CD8-positive, alpha-beta T cell (primary cell): ENCODE measurements at regions of chr15 and their contacts with region 1.

Region 1: GRCh38 chr15:39580117-39580484 is 778 bp upstream of the THBS1 start:
- DNase-seq: peak; percentile 78 to 93 (median 85)
- ATAC-seq: peak; percentile 89
- H3K4me3 ChIP-seq: peak overlapping the region in 1 of 2 experiments; percentile 57
- H3K4me3 Mint-ChIP-seq: peak overlapping the region; percentile 68
- H3K27ac ChIP-seq: no peak overlapping the region
- H3K27ac Mint-ChIP-seq: no peak overlapping the region
- H3K4me1 ChIP-seq: peaks cover 10% of the 10 kb centered on the region
- H3K4me1 Mint-ChIP-seq: peaks cover 16% of the 10 kb centered on the region
- H3K27me3 ChIP-seq: peaks cover 5 to 8% of the 10 kb centered on the region in 2 experiments
- H3K27me3 Mint-ChIP-seq: peaks cover 47% of the 10 kb centered on the region
- CTCF ChIP-seq: peak; percentile 89

Region 2: GRCh38 chr15:38474155-38474757 is 1105.8 kb before region 1 on chr15:
- CTCF ChIA-PET with region 1: interaction called, 3 read pairs
- POLR2A ChIA-PET with region 1: no interaction called
- intact Hi-C with region 1: loop called (anchors 5 kb)
- DNase-seq: peak in 7 of 9 experiments; percentile 13 to 85 (median 32)
- ATAC-seq: peak; percentile 99
- H3K4me3 ChIP-seq: no peak overlapping the region
- H3K4me3 Mint-ChIP-seq: no peak overlapping the region
- H3K27ac ChIP-seq: peak overlapping the region in 1 of 2 experiments; percentile 17
- H3K27ac Mint-ChIP-seq: peak overlapping the region; percentile 37
- H3K4me1 ChIP-seq: no peaks in the 10 kb centered on the region
- H3K4me1 Mint-ChIP-seq: peaks cover 9% of the 10 kb centered on the region
- H3K27me3 ChIP-seq: no peaks in the 10 kb centered on the region
- H3K27me3 Mint-ChIP-seq: no peaks in the 10 kb centered on the region
- CTCF ChIP-seq: peak; percentile 74

Region 3: DNA sequence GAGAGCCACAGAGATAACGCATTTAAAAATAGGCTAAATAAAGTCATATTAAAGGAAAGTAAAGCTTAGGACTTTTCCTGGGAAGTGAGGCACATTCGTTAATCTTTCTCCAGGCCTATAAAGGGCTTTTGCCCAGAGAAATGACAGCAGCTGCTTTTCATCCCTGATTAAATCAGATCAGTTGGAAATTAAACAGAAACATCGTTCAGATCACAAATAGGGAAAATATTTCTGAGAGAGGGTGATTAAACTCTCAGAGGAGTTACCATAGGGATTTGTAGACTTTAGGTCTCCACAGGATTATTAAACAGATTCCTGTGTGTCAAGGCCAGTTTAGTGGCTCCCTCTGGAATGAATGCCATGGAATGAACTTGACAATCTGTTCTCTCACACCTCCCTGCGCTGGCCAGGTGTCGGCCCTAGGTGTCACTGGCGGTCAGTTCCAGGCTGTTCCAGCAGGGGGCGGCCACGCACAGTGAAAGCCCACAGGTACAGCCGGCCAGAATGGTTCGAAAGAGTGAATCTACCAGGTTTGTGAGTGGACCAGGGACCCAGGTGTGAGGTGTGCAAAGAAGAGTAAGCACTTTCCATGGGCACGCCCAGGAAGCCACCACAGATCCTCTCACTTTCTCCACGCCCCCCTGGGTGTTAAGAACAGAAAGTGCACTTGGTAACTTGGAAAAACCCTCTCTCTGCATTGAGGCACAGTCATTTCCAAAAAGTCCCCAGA is 762.5 kb before region 1 on chr15:
- CTCF ChIA-PET with region 1: interaction called, 10 read pairs
- POLR2A ChIA-PET with region 1: no interaction called
- intact Hi-C with region 1: loop called in 1 of 2 experiments (anchors 1 kb)
- DNase-seq: peak; percentile 69 to 90 (median 78)
- ATAC-seq: peak; percentile 96
- H3K4me3 ChIP-seq: no peak overlapping the region
- H3K4me3 Mint-ChIP-seq: no peak overlapping the region
- H3K27ac ChIP-seq: no peak overlapping the region
- H3K27ac Mint-ChIP-seq: no peak overlapping the region
- H3K4me1 ChIP-seq: peaks cover 3% of the 10 kb centered on the region
- H3K4me1 Mint-ChIP-seq: peaks cover 5% of the 10 kb centered on the region
- H3K27me3 ChIP-seq: no peaks in the 10 kb centered on the region
- H3K27me3 Mint-ChIP-seq: peaks cover 4% of the 10 kb centered on the region
- CTCF ChIP-seq: peak; percentile 98

Region 4: GRCh38 chr15:39312984-39313383 is 267.1 kb before region 1 on chr15:
- CTCF ChIA-PET with region 1: interaction called, 3 read pairs
- POLR2A ChIA-PET with region 1: no interaction called
- intact Hi-C with region 1: loop called (anchors 2 kb)
- DNase-seq: peak in 2 of 9 experiments; percentile 17 to 50
- ATAC-seq: no peak
- H3K4me3 ChIP-seq: no peak overlapping the region
- H3K4me3 Mint-ChIP-seq: no peak overlapping the region
- H3K27ac ChIP-seq: no peak overlapping the region
- H3K27ac Mint-ChIP-seq: no peak overlapping the region
- H3K4me1 ChIP-seq: no peaks in the 10 kb centered on the region
- H3K4me1 Mint-ChIP-seq: no peaks in the 10 kb centered on the region
- H3K27me3 ChIP-seq: no peaks in the 10 kb centered on the region
- H3K27me3 Mint-ChIP-seq: peaks cover 5% of the 10 kb centered on the region
- CTCF ChIP-seq: no peak

Region 5: DNA sequence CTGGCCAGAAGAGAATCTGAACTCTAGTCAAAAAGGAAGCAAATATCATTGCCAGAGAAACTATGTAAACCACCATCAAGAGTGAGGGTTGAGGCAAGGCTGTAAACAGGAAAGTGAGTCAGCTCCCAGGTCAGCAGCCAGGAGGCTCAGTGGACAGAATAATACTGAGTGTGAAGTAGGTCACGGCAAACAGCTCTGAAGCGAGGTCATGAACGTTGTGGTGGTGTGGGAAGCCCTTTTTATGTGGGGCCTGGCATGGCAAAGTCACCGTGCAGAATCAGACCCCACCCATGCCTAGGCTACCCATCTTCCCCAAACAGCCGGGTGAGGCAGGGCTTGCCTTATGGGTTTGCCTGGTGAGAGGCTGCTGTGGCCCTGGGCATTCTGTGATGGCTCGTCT is 44.7 kb after region 1 on chr15:
- CTCF ChIA-PET with region 1: interaction called, 19 read pairs
- POLR2A ChIA-PET with region 1: no interaction called
- intact Hi-C with region 1: no loop called
- DNase-seq: peak; percentile 46 to 92 (median 76)
- ATAC-seq: peak; percentile 55
- H3K4me3 ChIP-seq: no peak overlapping the region
- H3K4me3 Mint-ChIP-seq: peak overlapping the region; percentile 70
- H3K27ac ChIP-seq: peak overlapping the region; percentile 54 to 88
- H3K27ac Mint-ChIP-seq: peak overlapping the region; percentile 99
- H3K4me1 ChIP-seq: peaks cover 71% of the 10 kb centered on the region
- H3K4me1 Mint-ChIP-seq: peaks cover 77% of the 10 kb centered on the region
- H3K27me3 ChIP-seq: no peaks in the 10 kb centered on the region
- H3K27me3 Mint-ChIP-seq: no peaks in the 10 kb centered on the region
- CTCF ChIP-seq: no peak